Gastrocnemius medialis (tissue), 4 donors: ENCODE measurements at regions of chr13 and their contacts with region 1.

Region 1: GRCh38 chr13:27270594-27271520 is at the start of gene RASL11A:
- DNase-seq: peak; percentile 57 to 71
- ATAC-seq: peak; percentile 86 to 90
- H3K4me3 ChIP-seq: peak within 1 kb of the TSS; percentile 65 to 91 (median 74)
- H3K27ac ChIP-seq: peak within 1 kb of the TSS; percentile 75 to 86 (median 84)
- H3K4me1 ChIP-seq: peaks cover 4 to 6% of the 10 kb centered on the region in 2 donors
- H3K27me3 ChIP-seq: no peaks in the 10 kb centered on the region
- CTCF ChIP-seq: peak; percentile 84 to 96 (median 87)
- POLR2A ChIP-seq: peak; percentile 61 to 87
- total RNA-seq, gene RASL11A: 2.8 to 9.0 (median 5.7) TPM

Region 2: GRCh38 chr13:27353166-27353583 is 82.3 kb after region 1 on chr13:
- in situ Hi-C with region 1: no loop called
- intact Hi-C with region 1: no loop called
- DNase-seq: no peak
- ATAC-seq: no peak
- H3K4me3 ChIP-seq: no peak overlapping the region
- H3K27ac ChIP-seq: no peak overlapping the region
- H3K4me1 ChIP-seq: no peaks in the 10 kb centered on the region
- H3K27me3 ChIP-seq: no peaks in the 10 kb centered on the region
- CTCF ChIP-seq: no peak
- POLR2A ChIP-seq: no peak

Region 3: GRCh38 chr13:27415116-27415515 is 144.3 kb after region 1 on chr13:
- in situ Hi-C with region 1: no loop called
- intact Hi-C with region 1: no loop called
- DNase-seq: peak; percentile 37 to 62
- ATAC-seq: peak; percentile 100
- H3K4me3 ChIP-seq: no peak overlapping the region
- H3K27ac ChIP-seq: peak overlapping the region; percentile 75 to 94 (median 86)
- H3K4me1 ChIP-seq: peaks cover 19 to 28% of the 10 kb centered on the region in 2 donors
- H3K27me3 ChIP-seq: no peaks in the 10 kb centered on the region
- CTCF ChIP-seq: no peak
- POLR2A ChIP-seq: peak; percentile 23 to 39

Region 4: GRCh38 chr13:27620377-27621115 is 349.7 kb after region 1 on chr13 and contains the start of gene LNX2:
- in situ Hi-C with region 1: loop called in 3 of 4 experiments (anchors 25 kb)
- intact Hi-C with region 1: no loop called
- DNase-seq: peak; percentile 98 to 99
- ATAC-seq: peak; percentile 72 to 73
- H3K4me3 ChIP-seq: peak within 1 kb of the TSS; percentile 69 to 98 (median 90)
- H3K27ac ChIP-seq: peak within 1 kb of the TSS; percentile 95 to 100 (median 99)
- H3K4me1 ChIP-seq: peaks cover 30 to 44% of the 10 kb centered on the region in 2 donors
- H3K27me3 ChIP-seq: no peaks in the 10 kb centered on the region
- CTCF ChIP-seq: peak in 2 of 5 experiments; percentile 24 to 29
- POLR2A ChIP-seq: peak; percentile 92 to 94
- total RNA-seq, gene LNX2: 5.0 to 7.1 (median 6.2) TPM